SK-N-SH (cell line): ENCODE measurements at regions of chr11 and their contacts with region 1.

Region 1: GRCh38 chr11:34492806-34493414 is 20.7 kb downstream of the ELF5 start:
- DNase-seq: peak; percentile 72
- H3K4me3 ChIP-seq: no peak overlapping the region
- H3K27ac ChIP-seq: no peak overlapping the region
- H3K4me1 ChIP-seq: no peaks in the 10 kb centered on the region; a peak in 1 of 4 replicates
- H3K27me3 ChIP-seq: no peaks in the 10 kb centered on the region; the same call in 1 of the 2 replicates
- CTCF ChIP-seq: peak; percentile 89
- EP300 ChIP-seq: no peak
- RAD21 ChIP-seq: peak; percentile 85

Region 2: GRCh38 chr11:33996498-33997454 is 496.1 kb before region 1 on chr11:
- CTCF ChIA-PET with region 1: interaction called, 19 read pairs
- POLR2A ChIA-PET with region 1: no interaction called
- DNase-seq: peak; percentile 80
- H3K4me3 ChIP-seq: no peak overlapping the region
- H3K27ac ChIP-seq: no peak overlapping the region
- H3K4me1 ChIP-seq: peaks cover 6 to 30% of the 10 kb centered on the region in 2 experiments; a peak in 2 of 4 replicates
- H3K27me3 ChIP-seq: peaks cover 14% of the 10 kb centered on the region; the same call in 1 of the 2 replicates
- CTCF ChIP-seq: peak; percentile 79
- EP300 ChIP-seq: no peak
- RAD21 ChIP-seq: peak; percentile 84

Region 3: GRCh38 chr11:34366522-34366921 is 126.4 kb before region 1 on chr11:
- CTCF ChIA-PET with region 1: interaction called, 68 read pairs
- POLR2A ChIA-PET with region 1: interaction called, 5 read pairs
- DNase-seq: peak; percentile 36
- H3K4me3 ChIP-seq: no peak overlapping the region
- H3K27ac ChIP-seq: no peak overlapping the region
- H3K4me1 ChIP-seq: peaks cover 0 to 7% of the 10 kb centered on the region in 2 experiments; a peak in 2 of 4 replicates
- H3K27me3 ChIP-seq: no peaks in the 10 kb centered on the region
- CTCF ChIP-seq: peak; percentile 42
- EP300 ChIP-seq: no peak
- RAD21 ChIP-seq: peak; percentile 59

Region 4: DNA sequence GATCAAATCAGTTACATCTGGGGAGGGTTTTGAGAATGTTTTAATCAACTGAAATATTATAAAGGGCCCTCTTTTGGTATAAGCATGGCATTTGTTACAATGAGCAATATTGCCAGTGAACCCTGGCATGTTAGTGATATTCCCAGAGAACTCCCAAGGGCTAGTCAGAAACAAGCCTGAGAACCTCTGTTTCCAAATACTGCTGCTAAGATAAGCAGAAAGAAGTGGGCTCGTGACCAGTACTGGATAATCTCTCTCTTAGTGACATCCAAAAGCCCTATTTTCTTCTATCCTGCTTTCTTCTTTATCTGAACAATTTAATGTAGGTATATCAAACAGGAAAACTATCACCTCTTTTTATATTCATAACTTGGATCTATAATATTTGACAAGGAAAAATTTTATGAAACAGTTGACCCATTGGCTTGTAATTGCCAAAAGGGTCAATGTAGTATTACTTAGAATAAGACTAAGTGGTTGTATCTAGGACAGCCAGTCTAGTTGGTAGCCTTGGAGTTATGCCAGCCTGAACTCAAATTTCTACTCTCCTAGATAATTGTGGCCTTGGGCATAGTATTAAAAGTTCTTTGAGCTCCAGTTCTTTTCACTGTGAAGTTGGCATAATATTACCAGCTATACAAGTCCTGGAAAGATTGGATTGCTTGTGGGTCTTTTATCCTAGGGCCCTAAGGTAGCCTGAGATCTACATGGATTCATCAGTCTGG is 38.4 kb before region 1 on chr11:
- CTCF ChIA-PET with region 1: interaction called, 11 read pairs
- POLR2A ChIA-PET with region 1: no interaction called
- DNase-seq: no peak
- H3K4me3 ChIP-seq: no peak overlapping the region
- H3K27ac ChIP-seq: no peak overlapping the region
- H3K4me1 ChIP-seq: no peaks in the 10 kb centered on the region
- H3K27me3 ChIP-seq: no peaks in the 10 kb centered on the region
- CTCF ChIP-seq: no peak
- EP300 ChIP-seq: no peak
- RAD21 ChIP-seq: no peak

Region 5: GRCh38 chr11:34468209-34468841 is 24.6 kb before region 1 on chr11:
- CTCF ChIA-PET with region 1: interaction called, 31 read pairs
- POLR2A ChIA-PET with region 1: no interaction called
- DNase-seq: peak; percentile 18
- H3K4me3 ChIP-seq: no peak overlapping the region
- H3K27ac ChIP-seq: no peak overlapping the region
- H3K4me1 ChIP-seq: no peaks in the 10 kb centered on the region
- H3K27me3 ChIP-seq: no peaks in the 10 kb centered on the region
- CTCF ChIP-seq: peak; percentile 35
- EP300 ChIP-seq: no peak
- RAD21 ChIP-seq: peak; percentile 59

Region 6: DNA sequence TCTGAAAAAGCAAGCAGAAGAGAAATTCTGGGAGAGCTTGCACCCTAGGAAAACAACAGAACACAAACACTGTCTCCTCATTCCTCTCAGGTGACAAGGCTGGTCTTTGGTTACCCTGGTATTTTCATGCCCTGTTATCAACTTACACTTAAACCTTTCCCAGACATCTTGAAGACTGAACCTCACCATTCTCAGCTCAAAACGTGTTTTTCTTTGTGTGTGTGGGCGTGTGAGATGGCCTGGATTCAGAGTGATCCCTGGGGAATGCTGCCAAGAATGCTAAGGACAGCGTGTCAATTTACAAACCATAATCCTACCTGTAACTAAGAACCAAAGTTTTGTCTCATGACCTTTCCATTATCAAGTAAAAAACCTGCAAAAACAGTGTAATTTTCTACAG is 12.6 kb before region 1 on chr11:
- CTCF ChIA-PET with region 1: interaction called, 30 read pairs
- POLR2A ChIA-PET with region 1: no interaction called
- DNase-seq: no peak
- H3K4me3 ChIP-seq: no peak overlapping the region
- H3K27ac ChIP-seq: no peak overlapping the region
- H3K4me1 ChIP-seq: no peaks in the 10 kb centered on the region
- H3K27me3 ChIP-seq: peaks cover 4% of the 10 kb centered on the region; the same call in 1 of the 2 replicates
- CTCF ChIP-seq: no peak
- EP300 ChIP-seq: no peak
- RAD21 ChIP-seq: no peak

Region 7: DNA sequence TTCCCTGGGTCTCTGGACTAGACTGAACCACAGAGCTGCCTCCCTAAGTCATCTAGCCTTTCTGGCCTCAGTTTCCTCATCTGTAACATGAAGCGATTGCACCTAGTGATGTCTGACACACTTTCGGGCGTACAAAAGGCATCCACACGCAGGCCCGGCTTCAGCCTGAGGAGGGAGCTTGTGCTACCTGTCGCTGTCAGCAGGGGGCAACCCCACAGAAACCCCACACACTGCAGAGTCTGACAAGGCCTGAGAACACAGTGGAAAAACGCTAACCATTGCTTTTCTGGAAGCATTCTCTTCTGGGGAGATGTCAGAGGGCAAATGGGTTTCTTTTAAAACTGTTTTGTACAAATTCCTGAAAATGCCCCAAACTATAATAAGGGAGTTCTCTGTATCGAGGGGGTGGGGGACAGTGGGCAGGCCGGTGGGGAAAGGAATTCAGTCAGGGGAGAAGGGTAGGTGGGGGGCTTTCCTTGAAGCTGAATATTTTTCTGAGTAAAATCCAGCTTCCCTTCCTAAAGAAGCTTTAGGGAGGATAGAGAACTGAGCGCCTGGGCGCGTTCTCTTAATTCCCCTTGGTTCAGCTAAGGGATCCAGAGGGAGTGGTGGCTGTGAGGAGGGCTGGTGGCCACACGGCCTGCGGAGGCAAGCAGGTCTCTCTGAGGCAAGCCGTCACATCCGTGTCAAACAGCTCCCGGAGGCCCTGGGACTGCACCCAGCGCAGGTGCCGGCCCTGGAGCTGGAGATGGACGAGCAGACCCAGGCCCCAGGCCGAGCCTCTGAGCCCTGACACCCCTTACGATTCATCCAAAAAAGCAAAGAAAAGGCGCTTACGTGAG is 20.2 kb after region 1 on chr11:
- CTCF ChIA-PET with region 1: interaction called, 16 read pairs
- POLR2A ChIA-PET with region 1: no interaction called
- DNase-seq: peak; percentile 78
- H3K4me3 ChIP-seq: peak overlapping the region in 1 of 2 experiments; percentile 31; a peak in 1 of 4 replicates
- H3K27ac ChIP-seq: no peak overlapping the region
- H3K4me1 ChIP-seq: peaks cover 0 to 3% of the 10 kb centered on the region in 2 experiments; a peak in 2 of 4 replicates
- H3K27me3 ChIP-seq: no peaks in the 10 kb centered on the region; the same call in 1 of the 2 replicates
- CTCF ChIP-seq: peak; percentile 75
- EP300 ChIP-seq: no peak
- RAD21 ChIP-seq: peak; percentile 59